ENCODE measurements at regions of chr3 and their contacts with region 1.

Region 1: DNA sequence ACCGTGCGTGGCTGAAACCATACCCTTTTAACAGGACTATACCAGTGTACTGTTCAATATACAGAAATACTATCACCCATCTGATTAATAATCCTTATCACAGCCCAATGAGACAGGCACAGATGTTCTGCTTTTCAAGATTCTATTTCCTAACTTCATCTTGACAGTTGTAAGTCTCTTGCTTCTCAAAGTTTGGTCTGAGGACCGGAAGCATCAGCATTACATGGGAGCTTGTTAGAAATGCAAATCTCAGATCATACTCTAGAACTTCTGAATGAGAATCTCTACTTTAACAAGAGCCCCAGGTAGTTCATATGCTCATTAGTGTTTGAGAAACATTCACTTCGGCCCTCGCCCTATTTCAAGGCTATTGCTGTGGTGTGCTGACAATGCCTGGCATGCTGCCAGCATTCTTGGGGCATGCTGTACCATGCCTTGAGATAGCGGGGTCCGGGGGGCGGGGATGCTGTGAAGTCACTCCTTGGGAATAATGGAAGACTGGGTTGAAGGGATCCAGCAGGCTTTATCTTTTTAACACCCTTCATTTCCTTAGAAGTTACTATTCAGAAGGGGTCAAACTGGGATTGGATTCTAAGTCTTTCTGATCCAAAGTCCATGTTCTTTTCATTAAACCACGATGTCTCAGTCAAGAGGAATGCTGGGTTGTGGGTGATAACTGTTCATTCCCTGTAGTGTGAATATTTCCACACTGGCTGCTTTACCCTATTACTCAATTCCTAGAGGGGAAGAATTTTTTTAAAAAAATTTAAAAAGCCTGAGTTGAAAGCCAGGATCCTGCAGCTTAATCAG is 194.7 kb downstream of the LPP start:
- DNase-seq: peak; percentile 95
- H3K4me3 ChIP-seq: peak overlapping the region in 1 of 3 experiments; percentile 8
- H3K27ac ChIP-seq: peak overlapping the region; percentile 94
- H3K4me1 ChIP-seq: peaks cover 38% of the 10 kb centered on the region
- H3K27me3 ChIP-seq: no peaks in the 10 kb centered on the region
- CTCF ChIP-seq: no peak

Region 2: DNA sequence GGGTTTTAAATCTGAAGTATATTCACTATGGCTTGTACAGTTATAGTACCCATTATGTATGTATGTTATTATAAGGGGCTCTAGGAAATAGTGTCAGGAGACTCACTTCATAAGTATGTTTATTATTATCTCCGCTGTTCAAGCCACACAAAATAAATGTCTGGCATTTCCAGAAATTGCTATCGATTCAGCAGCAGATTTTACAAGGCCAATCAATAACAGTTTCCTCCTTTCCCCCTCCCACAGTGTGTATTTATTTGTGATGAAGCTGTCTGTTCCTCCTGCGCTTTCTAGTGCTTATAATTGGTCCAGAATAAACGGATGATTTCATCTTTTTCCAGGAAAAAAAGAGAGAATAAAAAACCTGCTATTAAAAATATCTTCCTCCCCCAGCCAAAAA is 328.9 kb before region 1 on chr3:
- CTCF ChIA-PET with region 1: no interaction called
- dilution Hi-C with region 1: no loop called
- in situ Hi-C with region 1: no loop called
- intact Hi-C with region 1: no loop called
- DNase-seq: no peak
- H3K4me3 ChIP-seq: no peak overlapping the region
- H3K27ac ChIP-seq: no peak overlapping the region
- H3K4me1 ChIP-seq: no peaks in the 10 kb centered on the region
- H3K27me3 ChIP-seq: no peaks in the 10 kb centered on the region
- CTCF ChIP-seq: no peak

Region 3: GRCh38 chr3:188294823-188295487 is 53.7 kb before region 1 on chr3:
- CTCF ChIA-PET with region 1: no interaction called
- dilution Hi-C with region 1: no loop called
- in situ Hi-C with region 1: no loop called
- intact Hi-C with region 1: loop called (anchors 2 kb)
- DNase-seq: peak; percentile 95
- H3K4me3 ChIP-seq: peak overlapping the region in 2 of 3 experiments; percentile 18 to 28
- H3K27ac ChIP-seq: peak overlapping the region; percentile 97
- H3K4me1 ChIP-seq: peaks cover 57% of the 10 kb centered on the region
- H3K27me3 ChIP-seq: no peaks in the 10 kb centered on the region
- CTCF ChIP-seq: no peak

Region 4: GRCh38 chr3:188389711-188390342 is 41.2 kb after region 1 on chr3:
- CTCF ChIA-PET with region 1: no interaction called
- dilution Hi-C with region 1: no loop called
- in situ Hi-C with region 1: no loop called
- intact Hi-C with region 1: loop called (anchors 2 kb)
- DNase-seq: peak; percentile 74
- H3K4me3 ChIP-seq: peak overlapping the region in 2 of 3 experiments; percentile 6 to 17
- H3K27ac ChIP-seq: peak overlapping the region; percentile 95
- H3K4me1 ChIP-seq: peaks cover 37% of the 10 kb centered on the region
- H3K27me3 ChIP-seq: no peaks in the 10 kb centered on the region
- CTCF ChIP-seq: no peak

Region 5: GRCh38 chr3:188417271-188417696 is 68.6 kb after region 1 on chr3:
- CTCF ChIA-PET with region 1: no interaction called
- dilution Hi-C with region 1: no loop called
- in situ Hi-C with region 1: no loop called
- intact Hi-C with region 1: no loop called
- DNase-seq: no peak
- H3K4me3 ChIP-seq: no peak overlapping the region
- H3K27ac ChIP-seq: no peak overlapping the region
- H3K4me1 ChIP-seq: peaks cover 12% of the 10 kb centered on the region
- H3K27me3 ChIP-seq: no peaks in the 10 kb centered on the region
- CTCF ChIP-seq: no peak

Region 6: DNA sequence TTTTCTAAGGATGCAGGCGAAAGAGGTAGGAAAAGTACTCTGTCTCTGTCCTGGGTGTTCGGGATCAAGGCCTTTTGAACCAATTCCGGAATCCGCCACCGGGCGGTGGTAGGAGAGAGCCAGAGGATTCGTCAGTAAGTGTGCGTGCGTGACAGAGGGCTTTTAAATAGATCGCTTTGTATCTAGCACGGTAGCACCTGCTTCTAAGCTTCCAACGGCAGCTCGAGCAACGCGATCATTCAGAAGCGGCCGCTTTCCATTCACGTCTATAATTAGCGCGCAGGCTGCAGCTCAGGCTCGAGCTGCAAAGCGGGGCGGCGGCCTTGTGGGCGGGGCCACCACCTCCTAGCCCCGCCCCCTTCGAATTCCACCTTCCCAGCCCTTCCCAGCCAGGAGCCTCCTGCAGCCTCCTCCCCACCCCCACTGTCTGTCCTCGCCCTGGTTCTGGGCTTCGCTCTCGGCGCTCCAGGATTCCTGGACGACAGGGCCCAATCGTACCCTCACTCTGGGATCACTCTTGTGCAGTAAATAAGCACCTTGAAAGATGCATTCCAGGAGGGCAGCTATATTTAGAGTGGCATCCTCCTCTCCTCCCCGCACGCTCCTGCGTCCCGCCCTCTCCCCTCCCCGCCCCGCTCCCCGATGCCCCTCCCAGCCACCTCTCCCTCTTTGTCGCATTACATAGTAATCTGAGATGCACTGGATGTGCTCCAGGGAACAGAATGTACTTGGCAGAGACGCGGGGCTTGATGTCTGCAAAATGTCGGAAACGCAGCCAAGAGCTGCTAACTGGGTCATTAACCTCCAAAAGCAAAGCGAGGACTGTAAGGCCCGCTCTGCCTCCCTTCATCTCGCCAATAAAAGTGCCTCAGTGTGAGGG is 599.0 kb after region 1 on chr3:
- CTCF ChIA-PET with region 1: no interaction called
- dilution Hi-C with region 1: no loop called
- in situ Hi-C with region 1: no loop called
- intact Hi-C with region 1: loop called (anchors 5 kb)
- DNase-seq: peak; percentile 85
- H3K4me3 ChIP-seq: peak overlapping the region; percentile 23 to 47 (median 43)
- H3K27ac ChIP-seq: peak overlapping the region; percentile 86
- H3K4me1 ChIP-seq: peaks cover 37% of the 10 kb centered on the region
- H3K27me3 ChIP-seq: no peaks in the 10 kb centered on the region
- CTCF ChIP-seq: peak; percentile 31 to 53

Measured in mammary epithelial cell (primary cell).